HEK293 (cell line): ENCODE measurements at regions of chrX and their contacts with region 1.

Region 1: GRCh38 chrX:154712781-154713740 is 37.8 kb downstream of the GAB3 start:
- H3K4me3 ChIP-seq: no peak overlapping the region
- H3K27ac ChIP-seq: no peak overlapping the region
- H3K4me1 ChIP-seq: peaks cover 5% of the 10 kb centered on the region; the same call in 1 of the 2 replicates
- CTCF ChIP-seq: no peak

Region 2: GRCh38 chrX:154727871-154728270 is 14.8 kb after region 1 on chrX:
- CTCF ChIA-PET with region 1: interaction called, 25 read pairs
- POLR2A ChIA-PET with region 1: interaction called, 3 read pairs
- H3K4me3 ChIP-seq: no peak overlapping the region
- H3K27ac ChIP-seq: no peak overlapping the region
- H3K4me1 ChIP-seq: peaks cover 4% of the 10 kb centered on the region; the same call in 1 of the 2 replicates
- CTCF ChIP-seq: no peak

Region 3: DNA sequence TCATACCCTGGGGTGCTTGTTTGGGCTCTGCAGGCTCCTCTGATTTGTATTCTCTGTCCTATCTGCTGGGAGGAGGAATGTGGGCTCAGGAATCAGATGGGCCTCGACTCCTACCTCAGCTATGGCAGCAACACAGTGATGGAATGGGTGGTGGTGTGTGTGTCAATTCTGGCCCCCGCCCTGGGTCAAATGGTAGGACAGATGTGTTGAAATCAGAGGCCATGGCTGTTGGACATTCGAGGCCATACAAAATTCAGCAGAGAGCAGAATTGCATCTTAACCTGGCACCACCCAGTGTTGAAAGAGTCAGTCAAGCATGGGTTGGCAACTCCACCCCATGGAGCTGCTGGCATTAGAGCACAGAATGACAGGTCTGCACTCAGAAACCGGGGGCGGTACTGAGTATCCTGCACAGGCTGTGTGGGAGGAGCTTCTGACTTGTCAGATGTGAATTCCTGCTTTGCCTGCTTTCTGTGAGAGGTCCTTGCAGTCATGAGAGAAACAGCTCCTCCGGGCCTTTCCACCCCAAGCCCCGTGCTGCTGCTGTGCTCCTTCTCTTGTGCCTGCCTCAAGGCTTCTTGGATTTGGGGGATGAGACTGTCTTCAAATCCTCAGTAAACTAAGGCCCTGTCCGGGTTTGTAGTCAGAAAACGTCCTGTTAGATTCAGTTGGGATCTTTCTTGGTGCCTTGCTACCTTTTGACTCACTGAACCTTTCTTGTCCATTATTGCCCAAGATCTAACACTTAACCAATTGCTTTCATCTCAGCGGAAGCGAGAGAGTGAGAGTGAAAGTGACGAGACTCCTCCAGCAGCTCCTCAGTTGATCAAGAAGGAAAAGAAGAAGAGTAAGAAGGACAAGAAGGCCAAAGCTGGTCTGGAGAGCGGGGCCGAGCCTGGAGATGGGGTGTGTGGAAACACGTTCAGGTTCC is 62.6 kb after region 1 on chrX:
- CTCF ChIA-PET with region 1: no interaction called
- POLR2A ChIA-PET with region 1: no interaction called
- H3K4me3 ChIP-seq: no peak overlapping the region
- H3K27ac ChIP-seq: no peak overlapping the region
- H3K4me1 ChIP-seq: no peaks in the 10 kb centered on the region
- CTCF ChIP-seq: no peak